ENCODE measurements at regions of chr17 and their contacts with region 1.

Region 1: DNA sequence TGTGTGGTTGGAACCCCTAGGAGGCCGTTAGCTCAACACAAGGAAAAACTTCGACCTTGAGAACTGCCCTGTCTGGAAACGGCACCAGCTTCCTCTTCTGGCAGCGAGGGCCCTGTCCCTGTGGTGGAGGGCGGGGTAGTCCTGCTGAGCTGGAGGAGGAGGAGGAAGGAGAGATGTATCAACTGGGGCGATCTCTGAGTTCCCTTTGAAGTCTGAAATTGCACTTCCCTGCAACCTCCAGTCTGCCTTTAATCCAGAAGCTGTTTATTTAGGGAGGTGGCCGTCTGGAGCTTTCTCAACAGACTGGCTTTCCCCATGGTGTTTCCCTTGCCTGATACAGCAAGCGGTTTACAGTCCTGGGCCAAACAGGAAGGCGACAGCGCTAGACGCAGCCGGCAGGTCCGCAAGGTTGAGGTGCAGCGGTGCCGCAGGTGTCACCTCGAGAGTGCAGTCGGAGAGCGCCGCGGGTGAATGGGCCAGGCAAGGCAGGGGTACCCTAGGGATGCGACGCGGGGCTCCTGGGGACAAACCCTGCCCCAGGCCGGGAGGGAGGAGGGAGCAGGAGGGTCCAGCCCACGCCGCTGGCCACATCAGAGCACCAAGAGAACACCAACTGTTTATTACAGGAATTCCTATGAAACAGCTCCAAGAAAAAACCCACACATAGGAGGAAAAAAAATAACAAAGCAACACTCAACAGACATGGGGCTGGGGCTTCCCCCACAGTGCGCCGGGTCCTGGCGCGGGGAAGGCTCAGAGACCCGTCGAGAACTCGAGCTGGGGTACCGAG is 11.4 kb upstream of the MRPS23 start:
- DNase-seq: peak; percentile 60
- ATAC-seq: peak; percentile 67
- H3K4me3 ChIP-seq: peak overlapping the region; percentile 28; the same call in 1 of the 2 replicates
- H3K27ac ChIP-seq: peak overlapping the region; percentile 75
- H3K4me1 ChIP-seq: peaks cover 18% of the 10 kb centered on the region
- H3K27me3 ChIP-seq: no peaks in the 10 kb centered on the region
- CTCF ChIP-seq: no peak
- POLR2A ChIP-seq: no peak
- RAD21 ChIP-seq: peak; percentile 2; the same call in 1 of the 2 replicates

Region 2: GRCh38 chr17:56977673-56978395 is 883.4 kb before region 1 on chr17 and contains the start of gene SCPEP1:
- CTCF ChIA-PET with region 1: interaction called, 3 read pairs
- POLR2A ChIA-PET with region 1: interaction called, 10 read pairs
- dilution Hi-C with region 1: no loop called
- in situ Hi-C with region 1: no loop called
- intact Hi-C with region 1: no loop called
- DNase-seq: peak; percentile 70
- ATAC-seq: peak; percentile 98
- H3K4me3 ChIP-seq: peak within 1 kb of the TSS; percentile 99
- H3K27ac ChIP-seq: no peak within 1 kb of the TSS
- H3K4me1 ChIP-seq: peaks cover 3% of the 10 kb centered on the region
- H3K27me3 ChIP-seq: peaks cover 8% of the 10 kb centered on the region
- CTCF ChIP-seq: no peak
- POLR2A ChIP-seq: peak; percentile 78
- RAD21 ChIP-seq: no peak
- total RNA-seq, gene SCPEP1: 16.5 and 16.7 TPM in 2 replicates

Region 3: GRCh38 chr17:57338257-57338914 is 522.8 kb before region 1 on chr17:
- CTCF ChIA-PET with region 1: no interaction called
- POLR2A ChIA-PET with region 1: no interaction called
- dilution Hi-C with region 1: no loop called
- in situ Hi-C with region 1: no loop called
- intact Hi-C with region 1: no loop called
- DNase-seq: no peak
- ATAC-seq: no peak
- H3K4me3 ChIP-seq: no peak overlapping the region
- H3K27ac ChIP-seq: no peak overlapping the region
- H3K4me1 ChIP-seq: no peaks in the 10 kb centered on the region
- H3K27me3 ChIP-seq: no peaks in the 10 kb centered on the region
- CTCF ChIP-seq: no peak
- POLR2A ChIP-seq: no peak
- RAD21 ChIP-seq: no peak

Region 4: DNA sequence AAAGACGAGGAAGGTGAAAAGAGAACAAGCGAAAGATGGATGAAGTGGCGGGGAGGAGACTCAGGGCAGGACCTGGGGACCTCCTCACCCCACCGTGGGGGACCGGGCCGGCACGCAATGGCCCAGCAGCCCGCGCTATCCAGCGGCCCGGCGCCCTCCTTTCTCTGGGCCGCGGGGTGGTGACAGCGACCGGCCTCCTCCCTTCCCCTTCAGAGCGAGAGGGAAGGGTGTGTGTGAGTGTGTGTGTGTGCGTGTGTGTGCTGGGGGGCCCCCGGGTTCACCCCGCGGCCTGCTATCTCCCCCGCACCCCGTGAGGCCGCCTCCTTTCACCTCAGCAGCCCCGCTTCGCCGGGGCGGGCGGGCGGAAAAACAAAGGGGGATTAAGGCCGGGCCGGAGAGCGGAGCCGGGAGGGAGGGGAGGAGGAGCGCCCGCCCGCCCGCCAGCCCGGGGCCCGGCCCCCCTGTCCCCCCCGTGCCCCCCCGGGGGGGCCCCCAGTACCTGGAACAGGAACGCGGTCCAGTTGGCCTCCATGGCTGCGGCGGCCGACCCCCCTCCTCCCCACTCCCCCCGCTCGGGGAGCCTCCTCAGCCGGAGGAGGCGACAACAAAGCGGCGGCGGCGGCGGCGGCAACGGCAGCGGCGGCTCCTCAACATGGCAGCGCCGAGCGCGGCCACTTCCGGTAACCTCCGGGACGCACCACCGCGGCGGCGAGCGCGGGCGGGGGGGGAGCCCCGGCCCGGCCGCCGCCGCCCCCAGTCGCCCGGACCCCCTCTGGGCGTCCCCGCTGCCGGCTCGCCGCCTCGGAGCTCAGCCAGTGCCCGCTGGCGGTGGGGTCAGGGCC is 126.6 kb after region 1 on chr17 and contains the start of gene VEZF1:
- CTCF ChIA-PET with region 1: interaction called, 4 read pairs
- POLR2A ChIA-PET with region 1: interaction called, 7 read pairs
- dilution Hi-C with region 1: loop called (anchors 25 kb)
- in situ Hi-C with region 1: no loop called
- intact Hi-C with region 1: loop called (anchors 2 kb)
- DNase-seq: peak; percentile 44
- ATAC-seq: peak; percentile 60
- H3K4me3 ChIP-seq: peak within 1 kb of the TSS; percentile 99
- H3K27ac ChIP-seq: peak within 1 kb of the TSS; percentile 90
- H3K4me1 ChIP-seq: peaks cover 23% of the 10 kb centered on the region
- H3K27me3 ChIP-seq: no peaks in the 10 kb centered on the region
- CTCF ChIP-seq: no peak
- POLR2A ChIP-seq: no peak; the same call in none of the 2 replicates
- RAD21 ChIP-seq: no peak
- total RNA-seq, gene VEZF1: 40.3 and 42.1 TPM in 2 replicates

Region 5: DNA sequence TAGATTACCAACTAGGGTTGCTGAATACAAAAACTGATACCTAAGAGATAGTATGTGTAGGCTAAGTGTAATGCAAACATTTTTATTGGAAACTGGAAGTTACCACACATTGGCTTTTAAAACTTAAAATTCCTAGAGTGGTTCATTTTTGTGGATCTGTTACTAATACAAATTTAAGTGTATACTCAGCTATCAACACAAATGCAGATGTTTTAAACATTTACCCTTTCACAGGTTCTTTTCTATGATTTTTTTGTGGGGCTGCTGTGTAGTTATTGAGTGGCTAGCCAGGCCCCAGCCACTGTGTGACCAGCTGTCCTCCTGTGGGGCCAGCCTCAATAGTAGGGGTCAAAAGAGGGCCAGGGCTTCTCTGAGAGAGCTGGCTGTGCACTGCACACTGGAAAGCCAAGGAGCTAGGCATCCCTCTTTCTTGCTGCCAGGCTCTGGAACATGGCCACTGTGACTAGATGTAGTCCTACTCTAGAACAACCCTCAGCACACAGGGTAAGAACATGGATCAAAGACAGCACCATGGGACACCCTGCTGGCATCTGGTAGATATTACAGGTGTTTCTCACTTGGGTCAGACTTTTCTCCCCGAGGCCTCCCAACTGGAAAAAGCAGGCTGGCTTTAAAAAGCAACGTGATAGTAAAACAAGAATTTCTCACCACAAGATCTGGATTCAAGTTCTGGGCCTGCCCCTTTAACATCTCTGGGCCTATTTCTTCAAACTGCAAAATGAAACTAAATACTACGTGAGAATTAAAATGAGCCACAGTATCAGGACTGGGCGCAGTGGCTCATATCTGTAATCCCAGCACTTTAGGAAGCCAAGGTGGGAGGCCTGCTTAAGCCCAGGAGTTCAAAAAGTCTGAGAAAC is 134.1 kb after region 1 on chr17:
- CTCF ChIA-PET with region 1: interaction called, 26 read pairs
- POLR2A ChIA-PET with region 1: interaction called, 7 read pairs
- dilution Hi-C with region 1: loop called (anchors 25 kb)
- in situ Hi-C with region 1: loop called (anchors 5 kb)
- intact Hi-C with region 1: loop called (anchors 1 kb)
- DNase-seq: peak; percentile 81
- ATAC-seq: peak; percentile 91
- H3K4me3 ChIP-seq: no peak overlapping the region
- H3K27ac ChIP-seq: no peak overlapping the region
- H3K4me1 ChIP-seq: peaks cover 2% of the 10 kb centered on the region; the same call in 1 of the 2 replicates
- H3K27me3 ChIP-seq: no peaks in the 10 kb centered on the region
- CTCF ChIP-seq: peak; percentile 73
- POLR2A ChIP-seq: no peak
- RAD21 ChIP-seq: peak; percentile 90